ENCODE measurements at regions of chr4 and their contacts with region 1.

Region 1: GRCh38 chr4:147518846-147519767 is 38.2 kb downstream of the EDNRA start:
- DNase-seq: no peak
- H3K4me3 ChIP-seq: no peak overlapping the region
- CTCF ChIP-seq: peak; percentile 82

Region 2: DNA sequence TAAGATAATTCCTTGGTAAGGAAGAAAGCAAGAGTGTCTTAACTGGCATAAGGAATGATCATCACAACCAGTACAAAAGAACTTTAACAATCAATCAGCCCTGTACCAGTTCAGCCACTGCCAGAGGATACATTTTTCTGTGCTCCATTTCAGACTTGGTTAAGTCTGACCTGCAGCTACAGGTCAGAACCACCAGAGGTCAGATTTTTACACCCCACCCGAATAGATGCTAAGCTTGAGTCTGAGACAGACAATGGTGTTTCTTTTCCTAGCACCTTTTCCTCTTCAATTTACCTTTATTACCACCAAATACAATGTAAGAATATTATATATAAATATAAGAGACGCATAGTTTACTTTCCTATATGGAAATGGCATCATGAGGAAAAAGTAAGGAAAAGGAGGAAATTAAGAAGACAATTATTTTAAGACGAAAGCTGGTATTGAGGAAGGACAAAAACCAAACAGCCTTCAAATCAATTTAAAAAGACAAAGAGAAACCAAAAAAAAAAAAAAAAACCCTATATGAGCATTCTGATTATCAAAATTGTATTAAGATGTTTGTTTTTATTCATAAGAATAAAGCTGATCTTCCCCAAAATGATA is 358.1 kb before region 1 on chr4:
- CTCF ChIA-PET with region 1: interaction called, 25 read pairs
- POLR2A ChIA-PET with region 1: no interaction called
- DNase-seq: peak; percentile 19
- H3K4me3 ChIP-seq: no peak overlapping the region
- CTCF ChIP-seq: peak; percentile 76

Region 3: DNA sequence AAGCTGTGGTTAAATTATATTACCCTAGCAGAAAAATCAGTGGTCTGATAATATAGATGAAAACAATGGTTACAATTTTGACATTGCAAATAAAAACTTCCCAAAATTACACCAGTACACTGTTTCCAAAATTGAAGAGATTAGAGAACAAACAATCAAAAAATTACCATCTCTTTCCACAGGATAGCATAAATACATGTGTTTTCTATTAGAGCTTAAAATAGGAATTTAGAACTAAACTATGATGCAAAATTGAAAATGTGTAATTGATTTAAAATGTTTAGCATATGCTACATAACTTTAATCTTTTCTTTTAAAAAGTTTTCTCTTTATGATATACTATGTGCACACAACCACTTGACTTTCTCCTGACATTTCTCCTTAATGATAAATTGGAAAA is 31.5 kb before region 1 on chr4:
- CTCF ChIA-PET with region 1: interaction called, 11 read pairs
- POLR2A ChIA-PET with region 1: no interaction called
- DNase-seq: no peak
- H3K4me3 ChIP-seq: no peak overlapping the region
- CTCF ChIP-seq: no peak

Region 4: DNA sequence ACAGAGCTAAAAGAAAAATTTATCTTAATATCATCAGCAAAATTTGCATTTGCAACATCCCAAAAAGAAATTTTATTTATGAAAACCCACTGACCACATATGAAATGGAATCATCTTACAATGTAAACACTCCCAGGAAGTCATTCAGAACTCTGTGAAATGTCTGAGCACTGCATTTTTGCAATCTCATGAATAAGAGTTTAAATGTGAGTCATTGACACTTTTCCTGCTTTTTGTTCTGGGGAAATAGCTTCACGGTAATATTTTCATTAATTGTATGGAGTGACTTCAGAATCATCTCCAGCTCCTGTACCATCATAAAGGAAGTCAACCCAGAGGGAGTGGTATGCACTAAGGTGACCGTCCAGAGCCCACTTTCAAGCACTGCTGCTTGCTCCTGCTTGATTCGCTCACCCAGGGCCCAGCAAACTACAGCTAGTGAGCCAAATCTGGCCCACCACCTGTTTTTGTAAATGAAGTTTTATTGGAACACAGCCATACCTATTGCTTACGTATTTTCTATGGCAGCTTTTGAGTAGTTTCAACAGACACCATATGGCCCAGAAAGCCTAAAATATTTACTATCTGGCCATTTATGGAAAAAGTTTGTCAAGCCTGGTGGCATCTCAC is 21.0 kb before region 1 on chr4:
- CTCF ChIA-PET with region 1: interaction called, 10 read pairs
- POLR2A ChIA-PET with region 1: no interaction called
- DNase-seq: peak; percentile 65
- H3K4me3 ChIP-seq: no peak overlapping the region
- CTCF ChIP-seq: no peak

Region 5: GRCh38 chr4:147533331-147533730 is 14.2 kb after region 1 on chr4:
- CTCF ChIA-PET with region 1: interaction called, 26 read pairs
- POLR2A ChIA-PET with region 1: no interaction called
- DNase-seq: no peak
- H3K4me3 ChIP-seq: no peak overlapping the region
- CTCF ChIP-seq: no peak

Region 6: GRCh38 chr4:147539959-147540358 is 20.9 kb after region 1 on chr4:
- CTCF ChIA-PET with region 1: interaction called, 26 read pairs
- POLR2A ChIA-PET with region 1: no interaction called
- DNase-seq: no peak
- H3K4me3 ChIP-seq: no peak overlapping the region
- CTCF ChIP-seq: no peak

Region 7: GRCh38 chr4:147566762-147567161 is 47.7 kb after region 1 on chr4:
- CTCF ChIA-PET with region 1: no interaction called
- POLR2A ChIA-PET with region 1: no interaction called
- DNase-seq: no peak
- H3K4me3 ChIP-seq: no peak overlapping the region
- CTCF ChIP-seq: no peak

Region 8: GRCh38 chr4:147578051-147578476 is 59.0 kb after region 1 on chr4:
- CTCF ChIA-PET with region 1: interaction called, 11 read pairs
- POLR2A ChIA-PET with region 1: no interaction called
- DNase-seq: peak; percentile 84
- H3K4me3 ChIP-seq: no peak overlapping the region
- CTCF ChIP-seq: no peak

Region 9: DNA sequence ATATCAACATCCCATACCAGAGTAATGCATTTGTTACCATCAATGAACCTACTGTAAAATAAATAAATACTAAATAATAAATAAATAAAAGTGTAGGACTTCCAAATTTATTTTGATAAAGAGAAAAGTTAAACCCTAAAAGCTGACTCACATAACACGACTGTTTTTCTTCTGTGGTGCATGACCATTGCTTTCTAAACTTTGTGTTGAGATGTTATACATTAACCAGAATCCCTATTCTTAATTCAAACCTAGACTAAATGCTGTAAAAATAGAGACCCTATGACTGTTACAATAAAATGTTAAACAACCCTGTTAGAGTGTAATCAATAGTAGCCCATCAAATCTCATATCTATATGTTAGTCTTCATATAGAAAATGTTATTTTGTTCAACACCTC is 185.7 kb after region 1 on chr4:
- CTCF ChIA-PET with region 1: no interaction called
- POLR2A ChIA-PET with region 1: no interaction called
- DNase-seq: no peak
- H3K4me3 ChIP-seq: no peak overlapping the region
- CTCF ChIP-seq: no peak

Region 10: DNA sequence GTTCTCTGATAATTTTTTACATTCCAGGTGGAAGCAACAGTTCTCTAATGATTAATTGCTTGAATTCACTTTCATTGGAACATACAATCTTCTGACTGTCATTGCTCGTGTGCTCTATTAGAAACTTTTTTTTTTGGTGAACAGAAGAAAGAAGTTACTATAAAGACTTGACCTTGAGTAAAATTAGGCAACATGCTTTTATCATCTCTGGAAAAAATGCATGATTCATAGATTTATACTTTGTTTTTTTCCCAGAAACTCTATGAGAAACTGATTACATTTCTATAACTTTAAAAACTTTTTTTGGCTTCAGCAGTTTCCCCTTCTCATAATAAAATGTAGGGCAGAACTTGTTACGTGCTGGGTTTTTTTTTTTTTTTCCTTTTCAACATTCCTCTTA is 380.4 kb after region 1 on chr4:
- CTCF ChIA-PET with region 1: no interaction called
- POLR2A ChIA-PET with region 1: no interaction called
- DNase-seq: no peak
- H3K4me3 ChIP-seq: no peak overlapping the region
- CTCF ChIP-seq: no peak